ENCODE measurements at regions of chr2 and their contacts with region 1.

Region 1: GRCh38 chr2:40256649-40257048 is 195.2 kb downstream of the SLC8A1 start:
- DNase-seq: no peak
- H3K4me3 ChIP-seq: no peak overlapping the region
- H3K27ac ChIP-seq: no peak overlapping the region
- H3K4me1 ChIP-seq: no peaks in the 10 kb centered on the region
- H3K27me3 ChIP-seq: no peaks in the 10 kb centered on the region
- CTCF ChIP-seq: peak; percentile 53

Region 2: GRCh38 chr2:40304340-40304739 is 47.7 kb after region 1 on chr2:
- CTCF ChIA-PET with region 1: no interaction called
- POLR2A ChIA-PET with region 1: no interaction called
- intact Hi-C with region 1: no loop called
- DNase-seq: no peak
- H3K4me3 ChIP-seq: no peak overlapping the region
- H3K27ac ChIP-seq: no peak overlapping the region
- H3K4me1 ChIP-seq: no peaks in the 10 kb centered on the region
- H3K27me3 ChIP-seq: no peaks in the 10 kb centered on the region
- CTCF ChIP-seq: no peak

Region 3: DNA sequence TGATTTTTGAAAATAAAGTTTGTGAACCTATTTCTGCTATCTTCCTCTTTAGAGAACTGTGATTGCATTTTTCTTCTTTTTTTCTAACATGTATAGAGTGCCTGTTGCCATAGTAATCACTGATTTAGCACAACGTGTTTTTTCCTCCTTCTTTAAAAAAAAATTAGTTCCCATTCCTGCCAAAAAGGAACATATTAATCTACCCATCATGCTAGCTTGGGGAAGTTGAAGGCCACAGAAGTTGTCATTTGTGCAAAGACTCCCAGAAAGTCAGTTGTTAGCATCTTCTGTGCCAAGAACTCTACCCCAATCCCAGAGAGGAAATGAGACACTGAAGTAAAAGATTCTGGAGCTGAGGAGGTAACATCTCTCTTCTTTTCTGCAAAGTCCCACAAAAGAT is 137.9 kb after region 1 on chr2:
- CTCF ChIA-PET with region 1: interaction called, 10 read pairs
- POLR2A ChIA-PET with region 1: no interaction called
- intact Hi-C with region 1: no loop called
- DNase-seq: no peak
- H3K4me3 ChIP-seq: peak overlapping the region; percentile 35; the same call in 1 of the 2 replicates
- H3K27ac ChIP-seq: peak overlapping the region; percentile 77
- H3K4me1 ChIP-seq: peaks cover 29% of the 10 kb centered on the region
- H3K27me3 ChIP-seq: no peaks in the 10 kb centered on the region
- CTCF ChIP-seq: no peak

Measured in PC-9 (cell line).